Right lobe of liver (tissue), 6 donors: ENCODE measurements at regions of chr3 and their contacts with region 1.

Region 1: DNA sequence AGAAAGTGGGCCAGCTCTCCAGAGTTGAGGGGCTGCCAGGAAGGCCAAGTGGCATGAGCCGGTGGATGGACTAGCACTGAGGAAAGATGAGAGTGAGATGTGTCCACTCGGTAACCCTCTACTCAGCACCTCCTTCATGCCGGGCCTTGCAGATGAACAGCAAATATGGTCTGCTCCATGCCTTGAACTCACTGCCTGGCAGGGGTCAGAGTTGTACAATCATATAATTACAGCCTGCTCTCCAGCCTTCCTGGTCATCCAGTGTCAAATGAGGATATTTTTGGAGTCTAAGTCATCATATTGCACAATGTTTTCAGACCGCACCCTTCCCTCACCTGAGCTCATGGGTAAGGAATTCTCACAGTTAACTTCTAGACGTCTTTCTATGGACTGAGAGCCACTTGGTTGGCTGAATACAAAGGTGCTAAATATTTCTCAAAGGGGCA is 4.9 kb downstream of the MGLL start:
- DNase-seq: peak in 1 of 3 donors; percentile 40
- ATAC-seq: peak; percentile 56 to 66 (median 64)
- H3K4me3 ChIP-seq: no peak overlapping the region
- H3K27ac ChIP-seq: peak overlapping the region; percentile 39 to 92 (median 87)
- H3K4me1 ChIP-seq: peaks cover 0 to 73% (median 22%) of the 10 kb centered on the region in 4 donors
- H3K27me3 ChIP-seq: no peaks in the 10 kb centered on the region
- CTCF ChIP-seq: no peak
- POLR2A ChIP-seq: no peak

Region 2: GRCh38 chr3:127667119-127667681 is 150.2 kb before region 1 on chr3:
- intact Hi-C with region 1: no loop called
- DNase-seq: no peak
- ATAC-seq: no peak
- H3K4me3 ChIP-seq: no peak overlapping the region
- H3K27ac ChIP-seq: no peak overlapping the region
- H3K4me1 ChIP-seq: peaks cover 0 to 3% (median 0%) of the 10 kb centered on the region in 4 donors
- H3K27me3 ChIP-seq: no peaks in the 10 kb centered on the region
- CTCF ChIP-seq: no peak
- POLR2A ChIP-seq: no peak

Region 3: DNA sequence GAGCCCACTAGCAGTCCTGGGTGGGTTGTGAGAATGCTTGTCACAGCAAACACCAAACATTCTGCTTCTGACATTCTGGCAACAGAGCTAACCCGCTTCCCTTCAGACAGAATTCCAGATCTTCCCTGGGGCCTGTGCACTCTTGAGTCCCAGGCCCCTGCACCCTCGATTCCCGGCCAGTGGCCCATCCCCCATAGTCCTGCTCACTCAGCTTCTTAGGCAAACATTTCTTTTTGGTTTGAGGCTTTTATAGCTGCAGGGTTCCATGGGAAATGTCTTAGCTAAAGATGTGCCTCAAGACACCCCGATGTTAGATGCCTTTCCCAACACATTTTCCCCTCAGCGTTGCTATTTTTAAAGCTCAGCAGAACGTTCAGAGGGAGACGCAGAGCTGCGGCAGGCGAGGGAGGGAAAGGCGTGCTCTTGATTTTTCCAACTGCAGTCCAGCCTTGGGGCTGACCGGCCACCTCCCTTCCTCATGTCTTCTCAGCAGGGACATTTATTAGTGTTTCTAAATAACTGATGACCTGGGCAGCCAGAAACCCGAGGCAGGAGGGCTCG is 109.5 kb before region 1 on chr3:
- intact Hi-C with region 1: loop called in 1 of 2 experiments (anchors 10 kb)
- DNase-seq: peak; percentile 11 to 35 (median 21)
- ATAC-seq: no peak
- H3K4me3 ChIP-seq: no peak overlapping the region
- H3K27ac ChIP-seq: no peak overlapping the region
- H3K4me1 ChIP-seq: peaks cover 0 to 5% (median under 1%) of the 10 kb centered on the region in 4 donors
- H3K27me3 ChIP-seq: no peaks in the 10 kb centered on the region
- CTCF ChIP-seq: no peak
- POLR2A ChIP-seq: no peak

Region 4: GRCh38 chr3:127762077-127762786 is 55.2 kb before region 1 on chr3:
- intact Hi-C with region 1: loop called in 1 of 2 experiments (anchors 10 kb)
- DNase-seq: no peak
- ATAC-seq: no peak
- H3K4me3 ChIP-seq: no peak overlapping the region
- H3K27ac ChIP-seq: no peak overlapping the region
- H3K4me1 ChIP-seq: peaks cover 0 to 15% (median 3%) of the 10 kb centered on the region in 4 donors
- H3K27me3 ChIP-seq: no peaks in the 10 kb centered on the region
- CTCF ChIP-seq: no peak
- POLR2A ChIP-seq: no peak